Activated CD4-positive, alpha-beta memory T cell treated with anti-CD3 and anti-CD28 coated beads for 36 hours (primary cell): ENCODE measurements at regions of chr22 and their contacts with region 1.

Region 1: DNA sequence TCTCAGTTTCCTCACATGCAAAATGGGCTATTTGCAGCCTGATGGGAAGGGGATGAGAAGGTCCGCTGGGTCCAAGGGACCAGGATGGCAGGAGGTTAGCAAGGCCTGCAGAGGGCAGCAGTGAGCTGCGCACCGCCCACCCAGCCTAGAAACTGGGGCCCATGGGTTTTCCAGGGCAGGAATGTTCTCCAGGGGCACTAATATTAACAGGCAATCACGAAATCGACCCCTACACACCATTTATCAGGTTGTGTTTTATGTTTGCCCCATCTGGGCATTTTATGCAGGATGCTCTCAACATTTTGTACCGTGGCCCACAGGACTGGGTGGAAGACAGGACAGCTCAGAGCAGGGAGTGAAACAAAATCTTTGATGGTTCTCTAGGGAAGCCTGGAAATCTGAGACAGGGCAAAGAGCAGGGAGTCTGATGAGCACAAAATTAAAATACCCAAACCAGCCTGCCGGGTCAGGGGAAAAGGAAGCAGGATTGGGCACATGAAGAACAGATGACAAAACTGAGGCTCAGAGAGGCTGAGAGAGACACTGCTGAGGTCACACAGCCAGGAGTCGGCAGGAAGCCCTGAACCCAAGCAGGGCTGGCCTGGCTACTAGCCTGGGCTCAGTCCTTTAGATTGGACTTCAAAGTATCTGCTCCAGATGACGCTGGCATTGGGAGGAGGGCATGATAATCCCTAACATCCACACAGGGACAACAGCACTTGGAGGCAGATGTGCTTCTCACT is 1.6 kb upstream of the BCR start:
- DNase-seq: peak; percentile 72
- H3K4me3 Mint-ChIP-seq: no peak overlapping the region
- H3K27ac Mint-ChIP-seq: peak overlapping the region; percentile 30
- H3K4me1 Mint-ChIP-seq: peaks cover 41% of the 10 kb centered on the region
- H3K27me3 Mint-ChIP-seq: no peaks in the 10 kb centered on the region

Region 2: DNA sequence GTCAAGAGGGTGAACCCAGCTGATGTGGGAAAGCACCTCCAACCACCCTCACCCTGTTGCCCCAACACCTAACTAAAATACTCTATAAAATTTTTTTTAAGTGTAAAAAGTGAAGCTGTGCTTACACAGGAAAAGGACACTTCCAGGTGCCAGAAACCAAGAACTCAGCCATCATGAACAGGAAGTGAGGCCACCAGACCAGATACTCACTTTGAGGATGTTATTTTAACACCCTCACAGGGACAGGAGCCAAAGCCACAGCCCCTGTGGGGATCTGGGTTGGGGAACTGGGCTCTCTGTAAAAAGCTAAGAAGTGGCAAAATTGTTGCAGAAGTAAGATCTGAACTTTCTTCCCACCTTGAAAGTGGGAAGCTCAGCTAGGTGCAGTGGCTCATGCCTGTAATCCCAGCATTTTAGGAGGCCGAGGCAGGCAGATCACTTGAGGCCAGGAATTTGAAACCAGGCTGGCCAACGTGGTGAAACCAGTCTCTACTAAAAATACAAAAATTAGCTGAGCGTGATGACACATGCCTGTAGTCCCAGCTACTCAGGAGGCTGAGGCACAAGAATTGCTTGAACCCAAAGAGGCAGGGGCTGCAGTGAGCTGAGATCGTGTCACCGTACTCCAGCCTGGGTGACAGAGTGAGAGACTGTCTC is 40.6 kb before region 1 on chr22:
- CTCF ChIA-PET with region 1: interaction called, 4 read pairs
- POLR2A ChIA-PET with region 1: no interaction called
- intact Hi-C with region 1: loop called (anchors 2 kb)
- DNase-seq: peak; percentile 61
- H3K4me3 Mint-ChIP-seq: no peak overlapping the region
- H3K27ac Mint-ChIP-seq: peak overlapping the region; percentile 92
- H3K4me1 Mint-ChIP-seq: peaks cover 48% of the 10 kb centered on the region
- H3K27me3 Mint-ChIP-seq: no peaks in the 10 kb centered on the region

Region 3: GRCh38 chr22:23240639-23241389 is 62.1 kb after region 1 on chr22:
- CTCF ChIA-PET with region 1: interaction called, 15 read pairs
- POLR2A ChIA-PET with region 1: interaction called, 18 read pairs
- intact Hi-C with region 1: loop called (anchors 1 kb)
- DNase-seq: peak; percentile 72
- H3K4me3 Mint-ChIP-seq: no peak overlapping the region
- H3K27ac Mint-ChIP-seq: peak overlapping the region; percentile 72
- H3K4me1 Mint-ChIP-seq: peaks cover 96% of the 10 kb centered on the region
- H3K27me3 Mint-ChIP-seq: no peaks in the 10 kb centered on the region

Region 4: GRCh38 chr22:23281406-23282088 is 102.9 kb after region 1 on chr22:
- CTCF ChIA-PET with region 1: interaction called, 309 read pairs
- POLR2A ChIA-PET with region 1: interaction called, 5 read pairs
- intact Hi-C with region 1: loop called (anchors 1 kb)
- DNase-seq: peak; percentile 87
- H3K4me3 Mint-ChIP-seq: no peak overlapping the region
- H3K27ac Mint-ChIP-seq: no peak overlapping the region
- H3K4me1 Mint-ChIP-seq: peaks cover 35% of the 10 kb centered on the region
- H3K27me3 Mint-ChIP-seq: no peaks in the 10 kb centered on the region

Region 5: GRCh38 chr22:23385291-23386244 is 206.9 kb after region 1 on chr22:
- CTCF ChIA-PET with region 1: interaction called, 16 read pairs
- POLR2A ChIA-PET with region 1: no interaction called
- intact Hi-C with region 1: loop called (anchors 5 kb)
- DNase-seq: peak; percentile 88
- H3K4me3 Mint-ChIP-seq: no peak overlapping the region
- H3K27ac Mint-ChIP-seq: no peak overlapping the region
- H3K4me1 Mint-ChIP-seq: no peaks in the 10 kb centered on the region
- H3K27me3 Mint-ChIP-seq: peaks cover 2% of the 10 kb centered on the region